ENCODE measurements at regions of chr6 and their contacts with region 1.

Region 1: GRCh38 chr6:42075159-42075838 is 25.0 kb downstream of the TAF8 start:
- DNase-seq: peak; percentile 72 to 84 (median 75)
- ATAC-seq: peak; percentile 10 to 72 (median 66)
- H3K4me3 ChIP-seq: no peak overlapping the region
- H3K27ac ChIP-seq: peak overlapping the region in 8 of 12 donors; percentile 0 to 71 (median 30)
- H3K4me1 ChIP-seq: peaks cover 0 to 41% (median 0%) of the 10 kb centered on the region in 12 donors
- H3K27me3 ChIP-seq: no peaks in the 10 kb centered on the region
- CTCF ChIP-seq: peak; percentile 65 to 90 (median 83)
- POLR2A ChIP-seq: no peak

Region 2: DNA sequence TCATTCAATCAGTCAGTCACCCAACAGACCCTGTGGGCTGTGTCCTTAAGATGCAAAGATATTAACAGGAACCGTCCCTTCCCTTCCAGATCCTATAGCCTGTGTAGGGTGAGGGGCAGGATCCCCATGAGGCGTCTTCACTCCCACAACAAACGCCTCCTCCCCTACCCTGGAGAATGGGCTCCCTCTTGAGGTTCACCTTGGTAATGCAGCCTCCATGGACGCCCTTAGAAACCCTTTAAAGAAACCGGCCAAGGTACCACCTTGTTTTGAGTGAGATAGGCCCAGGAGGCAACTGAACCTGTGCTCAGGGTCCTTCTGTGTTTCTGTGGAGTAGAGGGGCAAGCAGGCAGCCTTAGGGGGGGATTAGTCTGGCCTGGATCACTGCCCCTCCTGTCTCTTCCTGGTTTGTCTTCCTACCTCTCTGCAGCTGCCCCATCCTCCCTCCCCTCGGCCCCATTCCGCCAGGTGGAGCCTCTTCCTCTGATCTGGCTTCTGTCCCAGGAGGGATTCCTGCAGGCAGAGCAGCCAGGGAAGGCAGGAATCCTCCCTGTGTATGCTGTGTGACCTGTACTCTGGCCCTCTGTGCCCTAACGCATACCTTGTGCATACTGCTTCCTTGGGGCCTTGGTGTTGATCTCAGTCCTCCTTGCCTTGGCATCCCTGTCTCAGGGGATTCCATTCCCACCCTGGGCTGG is 91.3 kb after region 1 on chr6:
- intact Hi-C with region 1: loop called (anchors 1 to 2 kb)
- DNase-seq: peak in 4 of 5 donors; percentile 41 to 60 (median 57)
- ATAC-seq: peak in 3 of 4 donors; percentile 73 to 82 (median 74)
- H3K4me3 ChIP-seq: no peak overlapping the region
- H3K27ac ChIP-seq: no peak overlapping the region
- H3K4me1 ChIP-seq: peaks cover 0 to 4% (median 0%) of the 10 kb centered on the region in 12 donors
- H3K27me3 ChIP-seq: no peaks in the 10 kb centered on the region
- CTCF ChIP-seq: peak; percentile 88 to 95 (median 92)
- POLR2A ChIP-seq: no peak

Region 3: GRCh38 chr6:42217519-42218367 is 142.4 kb after region 1 on chr6 and contains the start of gene MRPS10:
- intact Hi-C with region 1: loop called in 4 of 10 experiments (anchors 5 kb)
- DNase-seq: peak; percentile 93 to 94 (median 93)
- ATAC-seq: peak; percentile 99 to 100 (median 100)
- H3K4me3 ChIP-seq: peak within 1 kb of the TSS; percentile 49 to 90 (median 80)
- H3K27ac ChIP-seq: peak within 1 kb of the TSS; percentile 53 to 87 (median 80)
- H3K4me1 ChIP-seq: peaks cover 0 to 23% (median 12%) of the 10 kb centered on the region in 12 donors
- H3K27me3 ChIP-seq: no peaks in the 10 kb centered on the region
- CTCF ChIP-seq: peak in 1 of 12 donors; percentile 22
- POLR2A ChIP-seq: peak in 1 of 2 donors; percentile 62
- total RNA-seq, gene MRPS10: 47.5 to 73.5 (median 57.3) TPM

Region 4: DNA sequence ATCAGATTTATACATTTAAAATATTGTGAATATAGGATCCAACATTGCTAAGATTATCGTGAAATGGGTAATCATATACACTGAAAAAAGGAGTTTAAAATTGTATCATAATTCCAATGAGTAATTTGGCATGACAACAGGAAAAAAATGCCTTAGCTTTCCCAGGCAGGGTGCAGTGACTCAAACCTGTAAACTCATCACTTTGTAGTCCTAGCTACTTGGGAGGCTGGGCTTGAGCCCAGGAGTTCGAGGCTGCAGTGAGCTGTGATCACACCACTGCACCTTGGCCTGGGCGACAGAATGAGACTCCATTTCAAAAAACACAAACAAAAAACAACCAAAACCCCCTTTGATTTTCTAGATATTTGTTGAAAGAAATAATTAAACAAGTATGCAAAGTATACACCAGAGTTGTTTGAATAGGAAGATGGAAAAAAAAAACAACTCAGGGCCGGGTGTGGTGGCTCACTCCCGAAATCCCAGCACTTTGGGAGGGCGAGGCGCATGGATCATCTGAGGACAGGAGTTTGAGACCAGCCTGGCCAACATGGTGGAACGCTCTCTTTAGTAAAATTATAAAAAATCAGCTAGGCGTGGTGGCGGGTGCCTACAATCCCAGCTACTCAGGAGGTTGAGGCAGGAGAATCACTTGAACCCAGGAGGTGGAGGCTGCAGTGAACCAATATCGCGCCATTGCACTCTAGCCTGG is 277.7 kb after region 1 on chr6:
- intact Hi-C with region 1: no loop called
- DNase-seq: no peak
- ATAC-seq: no peak
- H3K4me3 ChIP-seq: no peak overlapping the region
- H3K27ac ChIP-seq: no peak overlapping the region
- H3K4me1 ChIP-seq: peaks cover 0 to 4% (median 0%) of the 10 kb centered on the region in 12 donors
- H3K27me3 ChIP-seq: no peaks in the 10 kb centered on the region
- CTCF ChIP-seq: no peak
- POLR2A ChIP-seq: no peak

Region 5: DNA sequence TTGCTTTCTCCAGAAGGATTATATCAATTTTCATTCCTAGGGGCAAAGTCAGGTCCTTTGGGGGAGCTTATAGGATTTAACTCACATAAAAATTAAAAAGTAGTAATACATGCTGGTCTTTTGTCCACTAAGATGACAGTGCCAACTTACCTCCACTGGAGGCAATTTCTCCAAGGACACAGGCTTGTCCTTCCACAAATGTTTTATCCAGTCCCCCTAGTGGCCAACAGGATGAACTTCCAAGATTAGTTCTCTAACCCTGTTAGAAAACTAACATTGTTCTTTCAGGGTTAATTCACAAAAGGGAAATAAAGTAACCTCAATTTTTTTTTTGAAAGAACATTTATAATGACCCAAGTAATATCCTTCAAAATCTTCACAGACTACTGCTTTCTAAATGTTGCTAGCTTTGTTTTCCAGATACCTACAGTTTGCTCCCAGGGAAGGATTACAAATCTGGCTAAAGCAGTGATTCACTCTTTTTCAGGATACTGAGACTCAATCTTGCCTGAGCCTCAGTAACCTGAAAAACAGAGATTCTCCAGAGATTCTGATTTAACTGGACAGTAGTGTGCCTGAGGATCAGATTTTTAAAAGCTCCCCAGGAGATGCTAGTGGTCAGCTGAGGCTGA is 456.9 kb after region 1 on chr6:
- intact Hi-C with region 1: loop called in 1 of 10 experiments (anchors 10 kb)
- DNase-seq: peak in 1 of 5 donors; percentile 14
- ATAC-seq: peak in 1 of 4 donors; percentile 36
- H3K4me3 ChIP-seq: no peak overlapping the region
- H3K27ac ChIP-seq: no peak overlapping the region
- H3K4me1 ChIP-seq: peaks cover 0 to 11% (median 0%) of the 10 kb centered on the region in 12 donors
- H3K27me3 ChIP-seq: no peaks in the 10 kb centered on the region
- CTCF ChIP-seq: peak; percentile 76 to 96 (median 84)
- POLR2A ChIP-seq: no peak

Region 6: GRCh38 chr6:43021270-43022047 is 946.2 kb after region 1 on chr6 and contains the start of gene RRP36:
- intact Hi-C with region 1: no loop called
- DNase-seq: peak; percentile 81 to 91 (median 86)
- ATAC-seq: peak; percentile 42 to 89 (median 83)
- H3K4me3 ChIP-seq: peak within 1 kb of the TSS; percentile 72 to 98 (median 92)
- H3K27ac ChIP-seq: peak within 1 kb of the TSS; percentile 7 to 96 (median 87)
- H3K4me1 ChIP-seq: peaks cover 0 to 58% (median 41%) of the 10 kb centered on the region in 12 donors
- H3K27me3 ChIP-seq: no peaks in the 10 kb centered on the region
- CTCF ChIP-seq: no peak
- POLR2A ChIP-seq: peak in 1 of 2 donors; percentile 47
- total RNA-seq, gene RRP36: 22.7 to 36.5 (median 32.3) TPM

Measured in heart left ventricle (tissue), 16 donors.